Activated naive CD8-positive, alpha-beta T cell treated with anti-CD3 and anti-CD28 coated beads, Interleukin-2, amount 10 ng/mL, durations not matched to agents 7 days and 5 days (primary cell): ENCODE measurements at regions of chr4 and their contacts with region 1.

Region 1: DNA sequence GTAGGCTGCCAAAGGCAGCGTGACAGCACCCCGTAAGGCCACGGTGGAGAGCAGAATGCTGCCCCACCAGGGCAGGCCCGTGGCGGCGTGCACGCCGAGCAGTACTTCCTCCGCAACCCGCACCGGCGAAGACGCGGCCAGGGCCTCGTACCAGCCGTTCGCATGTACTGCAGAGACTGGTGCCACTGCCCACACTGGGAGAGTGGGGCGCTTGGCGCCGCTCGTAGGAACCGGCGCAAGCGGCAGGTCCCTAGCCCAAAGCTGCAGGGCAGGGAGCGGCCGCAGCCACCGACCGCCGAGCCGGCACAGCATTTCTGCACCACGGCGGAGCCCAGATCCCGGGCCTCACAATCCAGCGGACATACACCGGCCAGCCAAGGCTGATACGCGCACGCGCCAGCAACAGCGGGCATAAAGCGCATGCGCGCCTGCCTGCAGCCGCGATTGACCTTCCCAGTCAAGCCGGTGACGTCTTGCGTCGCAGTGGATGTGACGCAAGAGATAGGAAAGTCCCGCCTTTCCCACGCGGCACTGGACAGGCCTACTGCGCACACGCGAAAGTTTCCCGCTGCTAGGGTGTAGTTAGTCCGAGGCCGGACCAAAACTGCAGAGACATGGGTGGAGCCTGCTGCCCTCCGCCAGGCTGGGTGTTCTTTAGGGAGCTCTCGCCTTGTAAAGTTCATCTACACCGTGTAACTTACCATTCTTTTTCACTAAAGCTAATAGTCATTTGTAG is at the start of gene COX18:
- DNase-seq: peak; percentile 94
- ATAC-seq: peak; percentile 84
- H3K4me3 Mint-ChIP-seq: peak within 1 kb of the TSS; percentile 80
- H3K27ac Mint-ChIP-seq: peak within 1 kb of the TSS; percentile 87
- H3K4me1 Mint-ChIP-seq: peaks cover 21% of the 10 kb centered on the region
- H3K27me3 Mint-ChIP-seq: no peaks in the 10 kb centered on the region
- total RNA-seq, gene COX18: 14.0 to 17.4 TPM

Region 2: GRCh38 chr4:73036123-73036522 is 33.4 kb before region 1 on chr4:
- POLR2A ChIA-PET with region 1: no interaction called
- DNase-seq: no peak
- ATAC-seq: no peak
- H3K4me3 Mint-ChIP-seq: no peak overlapping the region
- H3K27ac Mint-ChIP-seq: no peak overlapping the region
- H3K4me1 Mint-ChIP-seq: peaks cover 13% of the 10 kb centered on the region
- H3K27me3 Mint-ChIP-seq: peaks cover 2% of the 10 kb centered on the region

Region 3: GRCh38 chr4:73258686-73259570 is 189.4 kb after region 1 on chr4 and contains the start of gene ANKRD17:
- POLR2A ChIA-PET with region 1: interaction called, 43 read pairs
- DNase-seq: peak; percentile 92
- ATAC-seq: peak; percentile 84
- H3K4me3 Mint-ChIP-seq: peak within 1 kb of the TSS; percentile 97
- H3K27ac Mint-ChIP-seq: peak within 1 kb of the TSS; percentile 100
- H3K4me1 Mint-ChIP-seq: peaks cover 35% of the 10 kb centered on the region
- H3K27me3 Mint-ChIP-seq: no peaks in the 10 kb centered on the region
- total RNA-seq, gene ANKRD17: 49.8 to 53.0 TPM